Thyroid gland (tissue), 4 donors: ENCODE measurements at regions of chr6 and their contacts with region 1.

Region 1: DNA sequence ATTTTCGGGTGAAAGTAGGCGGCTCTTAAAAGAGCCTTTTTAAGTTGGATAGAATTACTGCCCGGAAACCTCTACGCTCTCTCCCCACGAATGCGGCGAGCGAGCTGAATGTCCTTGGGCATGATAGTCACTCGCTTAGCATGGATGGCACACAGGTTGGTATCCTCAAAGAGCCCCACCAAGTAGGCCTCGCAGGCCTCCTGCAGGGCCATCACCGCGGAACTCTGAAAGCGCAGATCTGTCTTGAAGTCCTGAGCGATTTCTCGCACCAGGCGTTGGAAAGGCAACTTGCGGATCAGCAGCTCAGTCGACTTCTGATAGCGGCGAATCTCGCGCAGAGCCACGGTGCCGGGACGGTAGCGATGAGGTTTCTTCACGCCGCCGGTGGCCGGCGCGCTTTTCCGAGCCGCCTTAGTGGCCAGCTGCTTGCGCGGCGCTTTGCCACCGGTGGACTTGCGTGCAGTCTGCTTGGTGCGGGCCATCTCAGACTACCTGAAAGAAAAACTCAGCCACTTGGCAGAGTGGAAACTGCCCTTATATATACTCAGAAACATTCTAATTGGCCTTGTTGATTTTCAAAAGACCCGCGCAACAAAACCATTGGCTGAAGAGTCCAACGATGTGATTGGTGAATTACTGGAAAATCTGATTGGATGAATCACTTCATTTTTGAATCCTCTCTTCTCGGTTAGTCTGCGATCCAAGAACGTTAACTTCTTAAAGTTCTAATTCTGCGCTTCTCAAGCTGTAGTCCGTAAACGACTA is 93.9 kb upstream of the BTN3A2 start:
- DNase-seq: peak; percentile 65 to 67
- H3K4me3 ChIP-seq: peak overlapping the region in 2 of 3 donors; percentile 17 to 34
- H3K27ac ChIP-seq: peak overlapping the region; percentile 85 to 97 (median 89)
- H3K4me1 ChIP-seq: peaks cover 5 to 6% of the 10 kb centered on the region in 2 donors
- H3K27me3 ChIP-seq: no peaks in the 10 kb centered on the region
- CTCF ChIP-seq: no peak
- POLR2A ChIP-seq: peak in 1 of 2 donors; percentile 46

Region 2: DNA sequence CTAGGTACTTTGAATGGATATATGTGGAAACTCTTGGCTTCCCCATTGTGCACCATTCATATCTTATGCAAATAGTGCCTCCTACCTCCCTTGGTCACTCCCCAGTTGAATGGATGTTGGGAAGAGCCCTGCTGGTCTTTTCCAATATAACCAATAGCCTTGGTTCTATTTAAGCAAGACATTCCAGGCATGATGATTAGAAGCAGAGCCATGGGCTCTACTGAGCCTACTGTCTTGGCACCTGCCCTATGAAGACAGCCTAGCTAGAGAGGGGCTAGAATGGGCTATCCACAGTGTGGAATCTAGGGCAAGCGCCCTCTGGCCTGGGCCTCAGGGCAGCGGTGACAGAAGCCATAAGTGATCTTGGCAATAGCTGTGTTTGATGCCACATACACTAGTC is 454.8 kb before region 1 on chr6:
- intact Hi-C with region 1: no loop called
- DNase-seq: no peak
- H3K4me3 ChIP-seq: no peak overlapping the region
- H3K27ac ChIP-seq: no peak overlapping the region
- H3K4me1 ChIP-seq: no peaks in the 10 kb centered on the region
- H3K27me3 ChIP-seq: no peaks in the 10 kb centered on the region
- CTCF ChIP-seq: no peak
- POLR2A ChIP-seq: no peak

Region 3: GRCh38 chr6:26216356-26216885 is 54.7 kb before region 1 on chr6:
- intact Hi-C with region 1: loop called (anchors 10 kb)
- DNase-seq: peak; percentile 83 to 84
- H3K4me3 ChIP-seq: peak overlapping the region in 1 of 3 donors; percentile 32
- H3K27ac ChIP-seq: peak overlapping the region; percentile 89 to 92 (median 90)
- H3K4me1 ChIP-seq: peaks cover 9% of the 10 kb centered on the region in 2 donors
- H3K27me3 ChIP-seq: peaks cover 5% of the 10 kb centered on the region
- CTCF ChIP-seq: no peak
- POLR2A ChIP-seq: peak; percentile 93 to 99

Region 4: DNA sequence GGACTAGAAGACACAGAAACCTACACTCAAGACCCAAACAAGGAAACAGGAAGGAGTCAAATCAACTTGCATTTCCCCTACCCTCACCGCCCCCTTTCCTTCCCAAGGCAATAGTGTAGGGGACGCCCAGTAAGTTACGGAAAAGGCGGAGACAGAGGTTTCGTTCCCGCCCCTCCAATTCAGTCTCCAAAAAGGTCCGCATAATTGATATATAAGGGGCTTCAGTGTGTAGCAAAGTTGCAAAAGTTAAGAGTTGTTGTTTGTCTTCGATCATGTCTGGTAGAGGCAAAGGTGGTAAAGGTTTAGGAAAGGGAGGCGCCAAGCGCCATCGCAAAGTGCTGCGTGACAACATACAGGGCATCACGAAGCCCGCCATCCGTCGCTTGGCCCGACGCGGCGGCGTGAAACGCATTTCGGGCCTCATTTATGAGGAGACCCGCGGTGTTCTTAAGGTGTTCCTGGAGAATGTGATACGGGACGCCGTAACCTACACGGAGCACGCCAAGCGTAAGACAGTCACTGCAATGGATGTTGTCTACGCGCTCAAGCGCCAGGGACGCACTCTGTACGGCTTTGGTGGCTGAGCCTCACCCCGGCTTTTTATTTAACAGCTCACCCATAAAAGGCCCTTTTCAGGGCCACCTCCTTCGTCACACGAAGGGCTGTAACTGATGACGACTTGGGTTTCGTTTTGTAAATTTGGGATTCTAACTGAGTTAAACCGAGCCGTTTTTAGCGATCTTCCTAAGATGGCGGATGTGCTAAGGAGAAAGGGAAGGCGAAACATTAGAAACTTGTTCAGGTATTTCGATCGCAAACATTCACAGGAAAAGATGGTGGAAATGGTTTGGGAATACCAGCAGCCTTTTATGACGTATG is 30.7 kb before region 1 on chr6:
- intact Hi-C with region 1: loop called (anchors 5 kb)
- DNase-seq: peak; percentile 63 to 70
- H3K4me3 ChIP-seq: peak overlapping the region; percentile 9 to 40 (median 30)
- H3K27ac ChIP-seq: peak overlapping the region; percentile 33 to 68 (median 51)
- H3K4me1 ChIP-seq: peaks cover 3 to 4% of the 10 kb centered on the region in 2 donors
- H3K27me3 ChIP-seq: peaks cover 3% of the 10 kb centered on the region
- CTCF ChIP-seq: no peak
- POLR2A ChIP-seq: peak in 1 of 2 donors; percentile 74